Activated CD4-positive, alpha-beta memory T cell treated with anti-CD3 and anti-CD28 coated beads for 36 hours (primary cell): ENCODE measurements at regions of chr12 and their contacts with region 1.

Region 1: DNA sequence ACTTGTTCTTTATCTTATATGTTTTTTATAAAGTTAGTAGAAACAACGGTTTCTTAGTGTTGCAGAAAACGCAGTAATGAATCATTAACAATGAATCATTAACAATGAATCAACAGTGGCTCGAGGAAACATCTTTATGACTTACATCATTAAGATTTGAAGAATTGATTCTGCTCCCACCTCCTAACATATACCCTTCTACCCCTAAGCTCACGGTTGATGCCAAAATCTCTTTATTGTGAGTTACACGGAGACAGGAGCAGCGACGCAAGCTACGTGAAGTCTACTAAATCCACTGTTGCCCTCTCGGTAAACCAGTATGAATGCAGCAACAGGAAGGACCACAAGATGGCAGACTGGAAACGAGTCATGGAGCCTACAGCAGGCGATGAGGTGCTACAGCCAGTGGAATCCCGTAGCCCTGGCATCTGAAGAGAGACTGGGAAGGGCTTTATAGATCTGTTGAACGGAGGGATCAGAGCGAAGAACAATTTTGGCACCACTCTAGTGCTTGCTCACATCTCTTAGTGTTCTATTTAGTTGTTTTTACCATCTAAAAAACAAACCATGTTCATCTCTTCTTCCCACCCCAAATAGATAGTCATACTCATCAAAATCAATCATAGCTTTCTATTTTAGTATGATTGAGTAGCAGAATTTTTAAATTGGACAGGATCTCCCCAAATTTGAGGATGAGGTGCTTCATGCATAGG is 332.7 kb downstream of the DUSP6 start:
- DNase-seq: peak; percentile 79
- H3K4me3 Mint-ChIP-seq: no peak overlapping the region
- H3K27ac Mint-ChIP-seq: no peak overlapping the region
- H3K4me1 Mint-ChIP-seq: peaks cover 8% of the 10 kb centered on the region
- H3K27me3 Mint-ChIP-seq: peaks cover 5% of the 10 kb centered on the region

Region 2: DNA sequence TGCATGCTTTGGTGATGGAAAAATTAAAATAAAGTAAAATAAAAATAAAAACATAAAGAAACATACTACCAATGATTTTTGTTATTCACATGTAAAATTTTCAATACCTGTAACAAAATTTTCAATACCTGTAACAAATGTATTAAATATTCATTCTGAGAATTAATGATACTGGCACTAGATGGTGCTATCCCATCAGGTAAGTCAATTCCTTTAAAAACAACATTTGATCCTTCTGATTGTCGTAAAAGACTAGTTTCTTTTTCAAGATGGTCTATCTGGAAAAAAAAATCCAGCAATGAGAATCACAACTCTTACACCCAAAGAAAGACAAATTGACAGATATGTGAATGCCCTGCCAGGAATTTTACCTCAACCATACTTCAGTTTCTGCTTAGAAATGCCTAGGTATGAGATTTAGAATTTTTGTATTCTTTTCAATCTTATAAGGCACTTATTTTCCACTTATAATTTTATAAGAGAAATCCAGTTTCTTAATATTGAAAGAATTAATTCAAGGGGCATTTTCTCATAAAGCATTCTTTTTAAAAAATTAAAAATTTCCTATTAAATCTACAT is 908.4 kb before region 1 on chr12:
- CTCF ChIA-PET with region 1: no interaction called
- POLR2A ChIA-PET with region 1: no interaction called
- intact Hi-C with region 1: loop called (anchors 10 kb)
- DNase-seq: no peak
- H3K4me3 Mint-ChIP-seq: no peak overlapping the region
- H3K27ac Mint-ChIP-seq: no peak overlapping the region
- H3K4me1 Mint-ChIP-seq: peaks cover 2% of the 10 kb centered on the region
- H3K27me3 Mint-ChIP-seq: no peaks in the 10 kb centered on the region

Region 3: DNA sequence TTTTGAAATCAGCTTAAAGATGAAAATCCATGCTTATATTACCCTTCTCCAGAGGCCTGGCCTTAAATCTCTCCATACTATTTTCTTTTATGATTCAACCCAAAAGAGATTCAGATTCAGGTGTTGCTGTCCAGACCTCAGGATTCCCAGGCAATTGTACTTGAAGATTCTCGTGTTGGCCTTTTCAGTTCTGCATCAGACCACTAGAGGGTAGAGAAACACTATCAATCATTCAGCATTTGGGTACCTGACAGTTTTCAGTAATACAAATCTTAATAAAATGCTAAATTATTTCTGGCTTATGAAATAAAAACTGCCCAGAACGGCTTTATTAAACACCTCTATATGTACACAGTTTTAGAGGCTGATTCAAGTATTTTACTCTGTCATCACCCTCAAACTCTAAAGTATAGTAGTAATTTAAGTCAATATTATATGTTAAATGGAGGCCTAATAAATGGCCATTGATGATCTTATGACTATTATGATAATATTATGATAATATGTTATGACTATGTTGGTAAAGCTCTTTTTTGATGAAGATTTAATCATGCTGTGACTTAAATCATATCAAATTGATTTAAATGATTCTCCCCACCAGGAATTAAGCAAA is 31.6 kb after region 1 on chr12:
- CTCF ChIA-PET with region 1: interaction called, 10 read pairs
- POLR2A ChIA-PET with region 1: no interaction called
- intact Hi-C with region 1: loop called (anchors 1 kb)
- DNase-seq: no peak
- H3K4me3 Mint-ChIP-seq: no peak overlapping the region
- H3K27ac Mint-ChIP-seq: no peak overlapping the region
- H3K4me1 Mint-ChIP-seq: peaks cover 13% of the 10 kb centered on the region
- H3K27me3 Mint-ChIP-seq: no peaks in the 10 kb centered on the region

Region 4: DNA sequence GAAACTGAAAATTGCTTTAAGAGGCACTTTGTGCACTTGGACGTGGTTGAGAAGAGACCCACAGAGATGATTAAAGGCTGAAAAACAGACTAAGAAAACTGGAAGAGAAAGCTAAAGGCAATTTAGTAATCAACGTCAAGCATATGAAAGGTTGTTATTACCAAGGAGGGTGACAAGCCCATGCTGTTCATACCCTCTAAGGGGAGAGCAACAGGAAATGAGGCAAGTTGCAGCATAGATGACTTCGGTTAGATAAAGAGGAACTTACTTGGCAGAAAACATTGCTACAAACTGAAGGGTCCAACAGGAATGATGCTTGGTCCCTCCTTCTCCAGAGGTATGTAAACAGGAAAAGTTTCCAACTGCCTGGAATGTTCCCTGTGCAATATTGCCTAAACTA is 225.0 kb after region 1 on chr12:
- CTCF ChIA-PET with region 1: interaction called, 11 read pairs
- POLR2A ChIA-PET with region 1: no interaction called
- intact Hi-C with region 1: loop called (anchors 1 kb)
- DNase-seq: peak; percentile 40
- H3K4me3 Mint-ChIP-seq: peak overlapping the region; percentile 25
- H3K27ac Mint-ChIP-seq: peak overlapping the region; percentile 86
- H3K4me1 Mint-ChIP-seq: peaks cover 39% of the 10 kb centered on the region
- H3K27me3 Mint-ChIP-seq: no peaks in the 10 kb centered on the region

Region 5: DNA sequence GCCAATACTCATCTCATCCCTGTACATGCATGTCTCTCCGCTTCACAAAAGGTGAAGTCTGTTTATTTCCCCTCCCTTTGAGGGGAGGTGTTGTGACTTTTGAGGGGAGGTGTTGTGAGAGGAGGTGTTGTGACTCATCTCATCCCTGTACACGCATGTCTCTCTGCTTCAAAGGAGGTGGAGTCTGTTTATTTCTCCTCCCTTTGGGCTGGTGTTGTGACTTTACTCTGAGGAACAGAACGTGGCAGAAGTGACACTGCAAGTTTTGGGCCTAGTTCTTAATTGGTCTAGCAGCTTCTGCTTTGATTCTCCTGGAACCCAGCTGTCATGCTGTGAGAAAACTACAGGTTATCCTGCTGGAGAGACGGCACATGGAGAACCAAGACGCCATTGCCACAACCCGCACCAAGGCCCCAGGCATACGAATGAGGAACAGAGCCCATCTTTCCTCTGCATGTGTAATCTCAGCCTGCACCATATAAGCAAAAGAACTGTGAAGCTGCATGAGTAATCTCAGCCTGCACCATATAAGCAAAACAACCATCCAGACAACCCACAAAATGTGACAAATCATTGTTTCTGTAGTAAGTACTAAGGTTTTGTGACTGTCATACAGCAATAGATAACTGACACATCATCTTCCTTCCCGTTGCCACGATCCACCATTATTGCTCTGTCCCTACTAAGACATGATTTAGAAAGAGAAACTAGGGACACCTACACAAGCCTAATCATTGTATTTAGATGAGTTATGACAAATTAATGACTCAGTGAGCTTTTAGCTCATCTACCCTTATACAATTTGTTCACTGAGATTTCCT is 475.1 kb after region 1 on chr12:
- CTCF ChIA-PET with region 1: interaction called, 6 read pairs
- POLR2A ChIA-PET with region 1: no interaction called
- intact Hi-C with region 1: loop called (anchors 1 kb)
- DNase-seq: peak; percentile 71
- H3K4me3 Mint-ChIP-seq: peak overlapping the region; percentile 36
- H3K27ac Mint-ChIP-seq: peak overlapping the region; percentile 99
- H3K4me1 Mint-ChIP-seq: peaks cover 30% of the 10 kb centered on the region
- H3K27me3 Mint-ChIP-seq: no peaks in the 10 kb centered on the region

Region 6: DNA sequence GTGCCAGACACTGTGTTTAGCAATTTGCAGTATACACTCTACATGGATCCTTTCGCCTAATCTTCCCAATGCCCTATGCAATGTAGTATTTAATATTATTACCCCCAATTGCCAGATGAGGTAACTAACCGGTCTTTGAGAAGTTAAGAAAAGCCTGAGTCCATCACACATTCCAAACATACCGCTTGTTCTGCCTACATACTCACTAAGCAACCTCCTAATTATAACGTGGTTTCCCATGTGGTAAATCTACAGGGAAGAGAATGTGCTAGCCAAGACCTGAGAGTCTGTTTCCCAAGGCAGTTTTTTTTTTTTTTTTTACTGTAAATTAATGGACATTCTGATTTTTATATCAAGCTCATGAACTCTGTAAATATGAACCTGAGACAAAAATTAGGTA is 651.9 kb after region 1 on chr12:
- CTCF ChIA-PET with region 1: no interaction called
- POLR2A ChIA-PET with region 1: no interaction called
- intact Hi-C with region 1: loop called (anchors 10 kb)
- DNase-seq: no peak
- H3K4me3 Mint-ChIP-seq: no peak overlapping the region
- H3K27ac Mint-ChIP-seq: peak overlapping the region; percentile 6
- H3K4me1 Mint-ChIP-seq: peaks cover 82% of the 10 kb centered on the region
- H3K27me3 Mint-ChIP-seq: no peaks in the 10 kb centered on the region

Region 7: DNA sequence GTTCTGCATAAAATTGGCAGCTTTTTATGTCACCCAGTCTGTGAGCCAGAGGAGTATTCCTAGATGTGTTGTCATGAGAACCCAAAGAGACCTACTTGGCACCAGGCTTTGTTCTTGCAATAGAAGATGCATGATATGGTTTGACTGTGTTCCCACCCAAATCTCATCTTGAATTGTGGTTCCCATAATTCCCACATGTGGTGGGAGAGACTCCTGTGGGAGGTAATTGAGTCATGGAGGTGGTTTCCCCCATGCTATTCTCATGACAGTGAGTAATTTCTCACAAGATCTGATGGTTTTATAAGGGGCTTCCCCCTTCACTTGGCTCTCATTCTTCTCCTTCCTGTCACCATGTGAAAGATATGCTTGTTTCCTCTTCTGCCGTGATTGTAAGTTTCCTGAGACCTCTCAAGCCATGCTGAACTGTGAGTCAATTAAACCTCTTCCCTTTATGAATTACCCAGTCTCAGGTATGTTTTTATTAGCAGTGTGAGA is 1261.0 kb after region 1 on chr12:
- CTCF ChIA-PET with region 1: no interaction called
- POLR2A ChIA-PET with region 1: no interaction called
- intact Hi-C with region 1: loop called (anchors 5 kb)
- DNase-seq: peak; percentile 37
- H3K4me3 Mint-ChIP-seq: no peak overlapping the region
- H3K27ac Mint-ChIP-seq: peak overlapping the region; percentile 13
- H3K4me1 Mint-ChIP-seq: peaks cover 16% of the 10 kb centered on the region
- H3K27me3 Mint-ChIP-seq: peaks cover 5% of the 10 kb centered on the region